A673 (cell line): ENCODE measurements at regions of chr17 and their contacts with region 1.

Region 1: DNA sequence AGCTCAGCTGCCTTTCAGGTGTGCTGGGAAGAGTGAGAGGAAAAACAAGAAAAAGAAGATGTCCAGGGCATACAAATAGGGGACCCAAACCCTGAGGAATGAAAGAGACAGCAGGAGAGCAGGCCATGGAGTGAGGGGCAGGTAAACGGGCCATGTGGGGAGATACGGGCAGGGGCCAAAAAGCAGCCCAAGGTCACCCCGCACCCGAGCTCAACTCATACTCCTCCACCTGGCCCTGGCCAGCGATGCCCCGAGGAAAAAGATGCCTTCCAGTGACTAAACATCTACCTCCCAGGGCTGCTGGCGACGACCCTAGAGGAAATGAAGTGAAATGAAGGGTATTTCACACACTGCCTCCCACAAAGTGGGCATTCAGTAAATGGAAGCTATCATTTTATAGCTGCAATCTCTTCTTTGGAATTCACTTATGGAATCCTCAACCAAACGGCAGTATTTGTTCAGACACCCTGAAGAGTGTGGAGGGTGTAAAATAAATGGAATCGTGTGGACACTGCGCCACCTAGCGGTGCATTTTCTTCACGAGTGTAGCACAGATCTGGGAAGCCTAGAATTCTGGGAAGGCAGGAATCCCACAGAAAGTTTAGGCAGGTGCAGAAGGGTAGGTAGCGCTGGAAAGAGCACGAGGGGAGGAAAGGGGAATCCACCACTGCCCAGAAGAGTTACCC is 14.9 kb downstream of the ELAC2 start:
- DNase-seq: peak; percentile 80
- H3K4me3 ChIP-seq: no peak overlapping the region
- H3K27ac ChIP-seq: no peak overlapping the region
- H3K4me1 ChIP-seq: peaks cover 10% of the 10 kb centered on the region
- H3K27me3 ChIP-seq: no peaks in the 10 kb centered on the region
- CTCF ChIP-seq: peak; percentile 91

Region 2: GRCh38 chr17:12180644-12181261 is 822.2 kb before region 1 on chr17:
- CTCF ChIA-PET with region 1: no interaction called
- POLR2A ChIA-PET with region 1: no interaction called
- intact Hi-C with region 1: loop called (anchors 2 kb)
- DNase-seq: peak; percentile 64
- H3K4me3 ChIP-seq: no peak overlapping the region
- H3K27ac ChIP-seq: no peak overlapping the region
- H3K4me1 ChIP-seq: no peaks in the 10 kb centered on the region
- H3K27me3 ChIP-seq: no peaks in the 10 kb centered on the region
- CTCF ChIP-seq: peak; percentile 87

Region 3: GRCh38 chr17:12342609-12343435 is 660.1 kb before region 1 on chr17:
- CTCF ChIA-PET with region 1: no interaction called
- POLR2A ChIA-PET with region 1: no interaction called
- intact Hi-C with region 1: loop called (anchors 5 kb)
- DNase-seq: peak; percentile 54
- H3K4me3 ChIP-seq: no peak overlapping the region
- H3K27ac ChIP-seq: no peak overlapping the region
- H3K4me1 ChIP-seq: no peaks in the 10 kb centered on the region
- H3K27me3 ChIP-seq: no peaks in the 10 kb centered on the region
- CTCF ChIP-seq: peak; percentile 69

Region 4: DNA sequence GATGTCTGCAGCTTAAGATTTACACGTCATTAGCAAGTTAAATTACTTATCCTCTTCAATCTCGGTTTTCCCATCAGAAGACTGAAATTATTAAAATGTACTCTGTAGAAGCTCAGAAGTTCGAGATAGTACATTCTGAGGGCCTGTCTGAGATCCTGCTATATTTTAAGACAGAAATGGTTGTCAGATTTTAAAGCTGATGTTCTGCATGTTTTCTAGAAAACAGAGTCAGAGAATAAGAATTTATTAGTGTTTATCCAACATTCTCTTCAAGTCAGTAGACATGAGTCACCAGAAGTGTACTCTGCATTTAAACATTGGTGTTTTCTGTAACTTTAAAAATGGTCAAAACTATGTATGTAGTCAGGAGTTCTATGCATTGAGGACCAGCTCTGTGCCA is 492.4 kb before region 1 on chr17:
- CTCF ChIA-PET with region 1: no interaction called
- POLR2A ChIA-PET with region 1: no interaction called
- intact Hi-C with region 1: no loop called
- DNase-seq: no peak
- H3K4me3 ChIP-seq: no peak overlapping the region
- H3K27ac ChIP-seq: no peak overlapping the region
- H3K4me1 ChIP-seq: no peaks in the 10 kb centered on the region
- H3K27me3 ChIP-seq: no peaks in the 10 kb centered on the region
- CTCF ChIP-seq: no peak

Region 5: DNA sequence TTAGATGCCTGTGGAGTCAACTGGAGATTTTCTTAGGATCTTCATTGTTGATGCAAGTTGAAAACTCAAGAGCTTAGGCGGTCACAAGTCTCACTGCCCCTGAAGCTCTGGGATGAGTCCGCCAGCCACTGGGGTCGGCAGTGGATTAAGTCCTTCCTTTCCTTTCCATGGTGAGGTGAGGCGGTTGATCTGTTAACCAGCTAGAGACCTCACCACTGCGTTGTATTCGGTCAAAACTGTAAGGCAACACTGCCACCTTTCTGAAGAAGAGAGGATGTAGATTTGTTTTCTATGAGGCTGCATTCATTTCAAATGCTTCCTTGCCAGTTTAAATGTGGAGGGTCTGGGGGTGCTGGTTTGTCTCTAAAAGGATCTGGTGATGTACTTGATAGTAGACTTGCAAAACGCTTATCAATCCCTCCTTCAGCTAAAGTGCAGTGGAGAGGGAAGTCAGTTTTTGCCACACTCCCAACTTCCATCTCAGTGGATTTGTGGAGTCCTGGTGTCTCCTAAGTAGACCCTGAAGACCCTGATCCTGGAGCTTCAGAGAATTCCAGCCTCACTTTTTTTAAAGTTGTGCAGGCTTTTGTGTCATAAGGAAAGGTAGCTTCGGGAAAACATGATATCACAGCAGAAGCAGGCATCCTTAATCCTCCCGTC is 335.5 kb before region 1 on chr17:
- CTCF ChIA-PET with region 1: no interaction called
- POLR2A ChIA-PET with region 1: no interaction called
- intact Hi-C with region 1: loop called (anchors 5 kb)
- DNase-seq: peak; percentile 58
- H3K4me3 ChIP-seq: no peak overlapping the region
- H3K27ac ChIP-seq: no peak overlapping the region
- H3K4me1 ChIP-seq: no peaks in the 10 kb centered on the region
- H3K27me3 ChIP-seq: peaks cover 69% of the 10 kb centered on the region
- CTCF ChIP-seq: peak; percentile 54

Region 6: GRCh38 chr17:12789075-12789776 is 213.7 kb before region 1 on chr17 and contains the start of gene ARHGAP44:
- CTCF ChIA-PET with region 1: no interaction called
- POLR2A ChIA-PET with region 1: no interaction called
- intact Hi-C with region 1: loop called (anchors 2 kb)
- DNase-seq: peak; percentile 58
- H3K4me3 ChIP-seq: peak within 1 kb of the TSS; percentile 57
- H3K27ac ChIP-seq: no peak within 1 kb of the TSS
- H3K4me1 ChIP-seq: no peaks in the 10 kb centered on the region
- H3K27me3 ChIP-seq: peaks cover 30% of the 10 kb centered on the region
- CTCF ChIP-seq: no peak
- total RNA-seq, gene ARHGAP44: 0.42 and 0.49 TPM in 2 replicates

Region 7: GRCh38 chr17:12963505-12963904 is 39.4 kb before region 1 on chr17:
- CTCF ChIA-PET with region 1: no interaction called
- POLR2A ChIA-PET with region 1: no interaction called
- intact Hi-C with region 1: no loop called
- DNase-seq: no peak
- H3K4me3 ChIP-seq: no peak overlapping the region
- H3K27ac ChIP-seq: no peak overlapping the region
- H3K4me1 ChIP-seq: no peaks in the 10 kb centered on the region
- H3K27me3 ChIP-seq: peaks cover 9% of the 10 kb centered on the region
- CTCF ChIP-seq: no peak